ENCODE measurements at regions of chr9 and their contacts with region 1.

Region 1: GRCh38 chr9:137295238-137295811 is 6.7 kb downstream of the NRARP start:
- DNase-seq: peak; percentile 55
- ATAC-seq: peak; percentile 56 to 61

Region 2: DNA sequence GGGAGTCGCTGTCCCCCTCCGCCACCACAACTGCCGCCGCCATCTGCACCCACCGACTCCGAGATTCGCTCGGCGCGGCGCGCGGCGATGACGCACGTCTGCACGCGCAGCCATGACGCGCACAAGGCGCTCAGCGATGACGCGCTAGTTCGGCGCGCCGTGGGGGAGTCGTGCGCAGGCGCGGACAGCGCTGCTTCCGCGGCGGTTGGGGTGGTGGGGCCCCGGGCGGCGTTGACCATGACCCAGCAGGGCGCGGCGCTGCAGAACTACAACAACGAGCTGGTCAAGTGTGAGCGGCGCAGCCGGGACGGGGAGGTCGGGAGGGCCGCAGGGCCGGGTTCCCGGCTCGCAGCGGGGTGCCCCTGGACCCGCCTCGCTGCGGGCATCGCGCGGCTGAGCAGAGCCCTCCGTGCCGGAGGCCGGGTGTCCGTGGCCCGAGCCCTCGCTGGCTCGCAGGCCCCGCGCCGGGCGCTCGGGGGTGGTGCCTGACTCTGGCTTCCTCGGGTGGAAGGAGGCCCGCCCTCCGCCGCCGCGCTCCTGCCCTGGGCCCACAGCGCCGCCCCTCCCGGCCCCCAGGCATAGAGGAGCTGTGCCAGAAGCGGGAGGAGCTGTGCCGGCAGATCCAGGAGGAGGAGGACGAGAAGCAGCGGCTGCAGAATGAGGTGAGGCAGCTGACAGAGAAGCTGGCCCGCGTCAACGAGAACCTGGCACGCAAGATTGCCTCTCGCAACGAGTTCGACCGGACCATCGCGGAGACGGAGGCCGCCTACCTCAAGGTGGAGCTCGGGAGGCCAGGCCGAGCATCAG is 106.6 kb before region 1 on chr9 and contains the starts of genes ANAPC2 and SSNA1:
- intact Hi-C with region 1: no loop called
- DNase-seq: peak; percentile 93
- ATAC-seq: peak; percentile 92 to 93
- total RNA-seq, gene ANAPC2: 31.2 to 32.5 TPM
- total RNA-seq, gene SSNA1: 53.1 to 55.1 TPM

Region 3: DNA sequence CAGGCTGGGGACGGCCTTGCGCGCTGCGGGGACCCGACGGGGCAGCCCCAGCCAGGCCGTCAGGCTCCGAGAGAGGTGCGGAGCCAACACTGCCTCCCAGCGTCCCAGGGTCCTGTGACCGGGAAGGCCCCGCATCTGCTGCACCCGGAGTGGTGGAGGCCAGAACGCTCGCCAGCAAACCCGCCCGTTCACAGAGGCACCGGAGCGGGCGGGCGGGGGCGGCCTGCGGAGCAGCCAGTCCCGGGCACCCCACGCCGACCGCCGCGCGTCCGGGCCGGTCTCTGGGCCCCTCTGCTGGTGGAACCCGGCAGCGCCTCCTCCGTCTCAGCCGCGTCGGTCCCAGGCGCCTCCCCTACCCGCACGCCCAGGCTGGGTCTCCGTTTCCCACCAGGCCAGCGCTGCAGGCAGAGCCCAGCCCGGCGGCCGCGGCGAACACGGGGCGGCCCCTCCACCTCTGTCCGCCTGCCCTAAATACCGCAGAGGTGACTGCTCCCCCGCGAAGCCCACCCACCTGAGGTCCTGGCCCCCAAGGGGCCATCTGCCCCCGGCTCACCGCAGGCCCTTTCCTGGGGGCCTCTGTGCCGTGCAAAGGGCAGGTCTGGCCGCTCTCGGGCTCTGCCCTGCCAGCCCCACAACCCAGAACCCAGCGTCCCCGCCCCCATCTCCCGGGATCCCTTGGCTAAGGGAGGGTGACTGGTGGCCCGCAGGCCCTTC is 111.7 kb after region 1 on chr9:
- intact Hi-C with region 1: loop called (anchors 5 to 10 kb)
- DNase-seq: peak; percentile 81
- ATAC-seq: peak; percentile 91 to 92

Region 4: DNA sequence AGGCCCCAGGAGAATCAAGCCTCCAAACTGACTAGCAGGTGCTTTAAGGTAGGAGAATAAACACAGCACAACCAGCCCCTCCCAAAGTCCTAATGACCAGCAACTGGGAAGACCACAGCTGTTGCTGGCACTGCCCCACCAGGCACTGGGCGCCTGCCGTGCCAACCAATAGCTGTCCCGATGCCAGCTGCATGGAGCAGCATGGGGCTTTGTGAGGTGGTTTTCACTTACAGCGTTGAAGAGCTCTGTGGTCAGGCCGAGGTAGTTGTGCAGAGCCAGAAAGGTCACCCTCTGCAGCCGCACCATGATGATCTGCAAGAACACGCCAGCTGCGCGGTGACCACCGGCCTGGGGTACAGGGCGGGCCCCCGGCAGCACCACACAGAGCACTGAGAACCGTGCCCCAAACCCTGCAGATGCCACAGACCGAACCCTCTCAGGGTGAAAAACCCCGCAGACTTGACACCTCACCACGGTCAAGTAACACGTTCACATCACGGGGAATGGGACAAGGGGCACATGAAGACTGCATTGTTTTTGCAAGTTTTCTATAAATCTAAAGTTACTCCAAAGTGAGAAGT is 226.2 kb after region 1 on chr9:
- intact Hi-C with region 1: loop called (anchors 10 kb)
- DNase-seq: no peak
- ATAC-seq: no peak

Measured in left cardiac atrium (tissue), 4 donors.